Colonic mucosa (tissue), 4 donors: ENCODE measurements at regions of chr19 and their contacts with region 1.

Region 1: GRCh38 chr19:48842789-48843162 is 6.5 kb upstream of the HSD17B14 start:
- DNase-seq: peak; percentile 55
- H3K4me3 ChIP-seq: no peak overlapping the region
- H3K27ac ChIP-seq: no peak overlapping the region
- H3K4me1 ChIP-seq: no peaks in the 10 kb centered on the region
- H3K27me3 ChIP-seq: no peaks in the 10 kb centered on the region
- CTCF ChIP-seq: peak; percentile 66

Region 2: DNA sequence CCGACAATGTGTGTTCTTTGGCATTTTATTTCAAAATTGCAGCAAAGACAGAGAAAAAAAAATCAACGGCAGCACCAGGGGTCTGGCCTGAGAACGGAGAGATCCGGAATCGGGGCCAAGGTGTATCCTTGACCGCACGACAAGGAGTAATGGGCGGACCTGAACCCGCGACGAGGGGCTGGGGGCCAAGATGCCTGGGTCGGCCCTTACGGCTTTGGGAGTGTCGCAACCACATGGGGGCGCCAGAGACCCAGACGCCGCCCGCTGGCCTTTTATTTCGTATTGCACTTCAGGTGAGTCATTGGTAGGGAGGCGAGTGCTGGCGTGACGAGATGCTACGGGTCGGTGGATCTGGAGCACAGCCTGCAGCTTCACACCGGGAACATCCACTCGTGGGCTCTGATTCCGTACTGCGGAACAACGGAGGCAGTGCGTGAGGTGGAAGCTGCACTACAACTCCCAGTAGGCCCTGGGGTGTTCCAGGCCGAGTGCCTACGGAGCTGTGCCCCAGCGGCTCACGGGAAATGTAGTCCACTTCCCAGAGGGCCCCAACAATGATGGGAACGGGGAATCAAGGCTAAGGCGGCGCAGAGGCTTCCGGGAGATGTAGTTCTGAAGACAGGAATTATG is 47.6 kb before region 1 on chr19:
- intact Hi-C with region 1: no loop called
- DNase-seq: peak; percentile 92
- H3K4me3 ChIP-seq: peak overlapping the region; percentile 33
- H3K27ac ChIP-seq: peak overlapping the region; percentile 34
- H3K4me1 ChIP-seq: no peaks in the 10 kb centered on the region
- H3K27me3 ChIP-seq: no peaks in the 10 kb centered on the region
- CTCF ChIP-seq: peak; percentile 96

Region 3: DNA sequence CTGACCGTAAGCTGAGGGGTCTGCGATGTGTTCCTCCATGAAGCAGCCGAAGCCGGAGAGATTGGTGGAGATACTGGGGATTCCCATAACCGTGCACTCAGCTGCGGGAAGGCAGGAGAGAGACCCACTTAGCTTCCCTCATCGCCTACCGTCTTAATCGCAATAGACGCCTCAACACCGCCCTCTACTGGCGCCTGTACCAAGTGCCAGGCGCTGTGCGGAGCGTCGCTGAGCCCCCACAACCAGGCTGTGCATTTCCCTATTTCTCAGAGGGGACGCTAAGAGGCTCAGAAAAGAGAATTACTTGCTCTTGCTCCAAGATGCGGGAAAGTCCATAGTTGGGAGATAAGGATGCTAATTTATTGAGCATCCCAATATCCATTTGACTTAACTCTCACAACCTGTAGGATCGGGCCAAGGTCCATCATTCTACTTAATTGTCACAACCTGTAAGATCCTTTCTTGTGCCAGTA is 128.2 kb after region 1 on chr19:
- intact Hi-C with region 1: loop called (anchors 2 kb)
- DNase-seq: peak; percentile 81
- H3K4me3 ChIP-seq: no peak overlapping the region
- H3K27ac ChIP-seq: no peak overlapping the region
- H3K4me1 ChIP-seq: no peaks in the 10 kb centered on the region
- H3K27me3 ChIP-seq: no peaks in the 10 kb centered on the region
- CTCF ChIP-seq: peak; percentile 96